Heart left ventricle (tissue), 16 donors: ENCODE measurements at regions of chr9 and their contacts with region 1.

Region 1: GRCh38 chr9:34376596-34377403 is at the start of gene MYORG:
- DNase-seq: peak; percentile 90 to 95 (median 93)
- ATAC-seq: peak; percentile 78 to 86 (median 83)
- H3K4me3 ChIP-seq: peak within 1 kb of the TSS; percentile 57 to 90 (median 80)
- H3K27ac ChIP-seq: peak within 1 kb of the TSS; percentile 31 to 85 (median 76)
- H3K4me1 ChIP-seq: peaks cover 0 to 51% (median 28%) of the 10 kb centered on the region in 12 donors
- H3K27me3 ChIP-seq: peaks cover 0 to 6% (median 0%) of the 10 kb centered on the region in 9 donors
- CTCF ChIP-seq: no peak
- POLR2A ChIP-seq: peak in 1 of 2 donors; percentile 60
- total RNA-seq, gene MYORG: 3.5 to 10.2 (median 6.7) TPM

Region 2: DNA sequence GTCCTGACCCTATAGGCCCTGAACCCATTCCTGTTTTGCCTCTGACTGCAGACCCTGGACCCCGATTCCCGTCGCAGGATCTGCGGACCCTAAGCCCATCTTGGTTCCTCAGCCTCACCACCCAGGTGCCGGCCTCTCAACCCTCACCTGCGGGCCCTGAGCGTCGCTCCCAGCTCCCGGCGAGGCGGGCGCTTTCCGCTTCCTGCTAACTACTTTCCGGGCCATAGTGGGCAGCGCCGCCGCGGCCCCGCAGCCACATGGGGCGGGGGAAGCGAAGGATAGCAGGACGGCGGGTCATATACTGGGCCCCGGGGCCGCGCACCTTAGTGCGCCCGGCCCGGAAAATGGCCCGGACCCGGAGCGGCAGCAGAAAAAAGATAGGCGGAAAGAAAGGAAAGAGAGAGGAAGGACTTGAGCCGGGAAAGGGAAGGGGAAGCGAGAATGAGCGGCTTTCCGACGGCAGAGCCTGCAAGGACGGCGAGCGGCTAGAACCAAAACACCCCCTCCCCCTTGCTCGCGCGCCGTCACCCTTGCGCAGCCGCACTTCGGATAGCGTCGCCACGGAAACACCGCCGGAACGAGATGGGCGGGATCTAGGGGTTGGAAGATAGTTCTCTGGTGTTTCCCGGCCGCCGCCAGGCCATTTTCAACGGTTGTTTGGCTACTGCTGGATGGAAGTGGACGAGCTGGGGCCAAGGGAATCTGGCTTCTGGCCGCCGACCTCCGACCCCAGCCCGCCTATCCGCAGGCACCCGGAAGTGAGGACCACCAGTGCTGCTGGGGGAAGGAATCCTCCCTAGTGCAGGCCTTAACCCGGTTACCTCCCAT is 250.4 kb before region 1 on chr9 and contains the start of gene DCAF12:
- intact Hi-C with region 1: loop called in 2 of 10 experiments (anchors 5 kb)
- DNase-seq: peak; percentile 93 to 95 (median 93)
- ATAC-seq: peak; percentile 96 to 99 (median 99)
- H3K4me3 ChIP-seq: peak within 1 kb of the TSS; percentile 51 to 98 (median 85)
- H3K27ac ChIP-seq: peak within 1 kb of the TSS; percentile 75 to 99 (median 90)
- H3K4me1 ChIP-seq: peaks cover 6 to 49% (median 41%) of the 10 kb centered on the region in 12 donors
- H3K27me3 ChIP-seq: no peaks in the 10 kb centered on the region
- CTCF ChIP-seq: peak in 3 of 12 donors; percentile 13 to 23 (median 22)
- POLR2A ChIP-seq: peak in 1 of 2 donors; percentile 67
- total RNA-seq, gene DCAF12: 14.2 to 29.4 (median 16.7) TPM

Region 3: GRCh38 chr9:34328987-34329832 is 47.6 kb before region 1 on chr9 and contains the starts of genes KIF24 and NUDT2:
- intact Hi-C with region 1: loop called (anchors 1 to 2 kb)
- DNase-seq: peak; percentile 96 to 99 (median 98)
- ATAC-seq: peak; percentile 97 to 98 (median 98)
- H3K4me3 ChIP-seq: peak within 1 kb of the TSS; percentile 47 to 88 (median 80)
- H3K27ac ChIP-seq: peak within 1 kb of the TSS; percentile 88 to 96 (median 91)
- H3K4me1 ChIP-seq: peaks cover 0 to 35% (median 14%) of the 10 kb centered on the region in 12 donors
- H3K27me3 ChIP-seq: no peaks in the 10 kb centered on the region
- CTCF ChIP-seq: peak in 4 of 12 donors; percentile 7 to 33 (median 10)
- POLR2A ChIP-seq: peak in 1 of 2 donors; percentile 88
- total RNA-seq, gene KIF24: 0.25 to 1.6 (median 0.67) TPM
- total RNA-seq, gene NUDT2: 14.1 to 21.3 (median 17.2) TPM

Region 4: GRCh38 chr9:34337404-34337803 is 39.4 kb before region 1 on chr9:
- intact Hi-C with region 1: loop called in 9 of 10 experiments (anchors 1 to 2 kb)
- DNase-seq: no peak
- ATAC-seq: no peak
- H3K4me3 ChIP-seq: no peak overlapping the region
- H3K27ac ChIP-seq: no peak overlapping the region
- H3K4me1 ChIP-seq: peaks cover 0 to 30% (median 12%) of the 10 kb centered on the region in 12 donors
- H3K27me3 ChIP-seq: no peaks in the 10 kb centered on the region
- CTCF ChIP-seq: no peak
- POLR2A ChIP-seq: no peak

Region 5: DNA sequence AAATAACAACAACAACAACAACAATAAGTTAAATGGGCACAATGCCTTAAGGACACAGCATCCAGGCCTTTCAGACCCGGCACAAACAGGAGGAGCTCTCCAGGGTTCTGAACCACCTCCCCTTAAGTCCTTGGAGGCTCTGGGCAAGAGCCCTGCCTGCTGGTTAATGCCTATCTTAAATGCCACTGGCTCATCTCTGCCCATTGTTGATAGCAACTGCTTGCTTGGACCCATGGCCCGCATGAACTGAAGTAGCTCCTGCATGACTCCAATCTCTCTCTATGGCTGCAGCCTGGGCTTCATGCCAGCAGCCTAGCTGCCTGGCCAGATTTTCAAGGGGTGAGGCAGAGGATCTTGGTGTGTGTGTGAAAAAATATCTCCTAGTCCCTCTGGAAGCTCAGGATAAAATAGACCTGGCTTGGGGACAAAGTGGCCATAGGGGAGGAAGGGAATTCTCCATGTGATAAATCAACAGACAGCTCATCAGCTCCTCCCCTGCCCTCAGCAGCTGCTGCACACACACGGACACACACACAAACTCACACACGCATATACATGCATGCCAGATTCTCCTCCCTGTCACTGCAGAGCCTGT is 54.1 kb after region 1 on chr9:
- intact Hi-C with region 1: loop called in 1 of 10 experiments (anchors 5 kb)
- DNase-seq: peak; percentile 80 to 90 (median 84)
- ATAC-seq: peak; percentile 96 to 98 (median 98)
- H3K4me3 ChIP-seq: no peak overlapping the region
- H3K27ac ChIP-seq: peak overlapping the region in 1 of 12 donors; percentile 39
- H3K4me1 ChIP-seq: peaks cover 6 to 38% (median 19%) of the 10 kb centered on the region in 12 donors
- H3K27me3 ChIP-seq: no peaks in the 10 kb centered on the region
- CTCF ChIP-seq: no peak
- POLR2A ChIP-seq: no peak

Region 6: GRCh38 chr9:34451545-34451944 is 74.7 kb after region 1 on chr9:
- intact Hi-C with region 1: no loop called
- DNase-seq: no peak
- ATAC-seq: no peak
- H3K4me3 ChIP-seq: no peak overlapping the region
- H3K27ac ChIP-seq: peak overlapping the region; percentile 1 to 81 (median 60)
- H3K4me1 ChIP-seq: peaks cover 9 to 98% (median 78%) of the 10 kb centered on the region in 12 donors
- H3K27me3 ChIP-seq: no peaks in the 10 kb centered on the region
- CTCF ChIP-seq: no peak
- POLR2A ChIP-seq: no peak

Region 7: GRCh38 chr9:34651876-34652601 is 275.2 kb after region 1 on chr9 and contains the start of gene IL11RA:
- intact Hi-C with region 1: no loop called
- DNase-seq: peak; percentile 91 to 95 (median 94)
- ATAC-seq: peak; percentile 74 to 86 (median 82)
- H3K4me3 ChIP-seq: peak within 1 kb of the TSS; percentile 35 to 65 (median 54)
- H3K27ac ChIP-seq: peak within 1 kb of the TSS; percentile 74 to 95 (median 86)
- H3K4me1 ChIP-seq: peaks cover 7 to 81% (median 59%) of the 10 kb centered on the region in 12 donors
- H3K27me3 ChIP-seq: no peaks in the 10 kb centered on the region
- CTCF ChIP-seq: peak in 2 of 12 donors; percentile 12 to 18
- POLR2A ChIP-seq: peak in 1 of 2 donors; percentile 73
- total RNA-seq, gene IL11RA: 32.4 to 113 (median 50.1) TPM